Caco-2 (cell line): ENCODE measurements at regions of chr9 and their contacts with region 1.

Region 1: DNA sequence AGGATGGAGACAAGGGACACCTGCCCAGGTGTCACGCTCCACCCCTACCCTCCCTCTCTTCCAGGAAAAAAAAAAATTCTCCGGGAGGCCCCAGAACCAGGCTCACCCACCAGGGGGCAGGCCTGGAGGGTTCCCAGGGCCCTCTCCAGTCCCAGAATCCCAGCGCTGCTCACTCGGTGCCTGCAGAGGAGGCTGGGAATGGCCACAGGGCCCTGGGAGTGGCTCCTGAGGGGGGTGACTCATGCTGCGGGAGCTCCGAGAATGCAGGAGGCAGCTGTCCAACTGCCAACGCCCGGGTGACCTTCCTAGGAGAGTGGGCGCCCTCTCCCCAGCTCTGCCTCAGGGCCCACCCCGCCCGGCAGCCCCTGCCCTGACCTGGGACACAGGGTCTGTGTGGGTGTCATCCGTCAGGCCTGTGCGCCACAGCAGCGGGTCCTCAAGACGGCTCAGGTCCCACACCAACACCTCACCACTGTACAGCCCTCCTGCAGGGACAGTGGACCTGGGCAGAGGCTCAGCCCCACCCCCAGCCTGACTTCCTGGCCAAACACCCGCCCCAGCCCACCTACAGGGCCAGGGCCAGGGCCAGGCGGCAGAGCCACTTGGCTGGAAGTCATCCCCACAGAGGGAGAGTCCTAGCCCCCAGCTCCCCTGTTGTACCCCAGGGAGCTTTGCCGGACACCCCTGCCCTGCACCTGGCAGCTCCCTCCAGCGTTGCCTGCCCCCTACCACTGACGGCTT is 21.2 kb downstream of the DYNC2I2 start:
- DNase-seq: peak; percentile 98 to 99
- H3K4me3 ChIP-seq: peak overlapping the region; percentile 43
- H3K4me3 Mint-ChIP-seq: peak overlapping the region; percentile 76
- H3K27ac Mint-ChIP-seq: peak overlapping the region; percentile 95
- H3K4me1 ChIP-seq: peaks cover 26% of the 10 kb centered on the region
- H3K4me1 Mint-ChIP-seq: peaks cover 5% of the 10 kb centered on the region
- H3K27me3 ChIP-seq: no peaks in the 10 kb centered on the region
- H3K27me3 Mint-ChIP-seq: no peaks in the 10 kb centered on the region
- CTCF ChIP-seq: peak; percentile 91 to 92

Region 2: GRCh38 chr9:128355451-128355850 is 280.0 kb before region 1 on chr9:
- CTCF ChIA-PET with region 1: no interaction called
- POLR2A ChIA-PET with region 1: no interaction called
- intact Hi-C with region 1: no loop called
- DNase-seq: no peak
- H3K4me3 ChIP-seq: no peak overlapping the region
- H3K4me3 Mint-ChIP-seq: no peak overlapping the region
- H3K27ac Mint-ChIP-seq: no peak overlapping the region
- H3K4me1 ChIP-seq: no peaks in the 10 kb centered on the region
- H3K4me1 Mint-ChIP-seq: no peaks in the 10 kb centered on the region
- H3K27me3 ChIP-seq: no peaks in the 10 kb centered on the region
- H3K27me3 Mint-ChIP-seq: no peaks in the 10 kb centered on the region
- CTCF ChIP-seq: no peak

Region 3: GRCh38 chr9:128438343-128439109 is 196.9 kb before region 1 on chr9:
- CTCF ChIA-PET with region 1: interaction called, 10 read pairs
- POLR2A ChIA-PET with region 1: no interaction called
- intact Hi-C with region 1: no loop called
- DNase-seq: peak; percentile 82 to 88
- H3K4me3 ChIP-seq: no peak overlapping the region
- H3K4me3 Mint-ChIP-seq: no peak overlapping the region
- H3K27ac Mint-ChIP-seq: no peak overlapping the region
- H3K4me1 ChIP-seq: no peaks in the 10 kb centered on the region
- H3K4me1 Mint-ChIP-seq: no peaks in the 10 kb centered on the region
- H3K27me3 ChIP-seq: no peaks in the 10 kb centered on the region
- H3K27me3 Mint-ChIP-seq: no peaks in the 10 kb centered on the region
- CTCF ChIP-seq: peak; percentile 93 to 94

Region 4: DNA sequence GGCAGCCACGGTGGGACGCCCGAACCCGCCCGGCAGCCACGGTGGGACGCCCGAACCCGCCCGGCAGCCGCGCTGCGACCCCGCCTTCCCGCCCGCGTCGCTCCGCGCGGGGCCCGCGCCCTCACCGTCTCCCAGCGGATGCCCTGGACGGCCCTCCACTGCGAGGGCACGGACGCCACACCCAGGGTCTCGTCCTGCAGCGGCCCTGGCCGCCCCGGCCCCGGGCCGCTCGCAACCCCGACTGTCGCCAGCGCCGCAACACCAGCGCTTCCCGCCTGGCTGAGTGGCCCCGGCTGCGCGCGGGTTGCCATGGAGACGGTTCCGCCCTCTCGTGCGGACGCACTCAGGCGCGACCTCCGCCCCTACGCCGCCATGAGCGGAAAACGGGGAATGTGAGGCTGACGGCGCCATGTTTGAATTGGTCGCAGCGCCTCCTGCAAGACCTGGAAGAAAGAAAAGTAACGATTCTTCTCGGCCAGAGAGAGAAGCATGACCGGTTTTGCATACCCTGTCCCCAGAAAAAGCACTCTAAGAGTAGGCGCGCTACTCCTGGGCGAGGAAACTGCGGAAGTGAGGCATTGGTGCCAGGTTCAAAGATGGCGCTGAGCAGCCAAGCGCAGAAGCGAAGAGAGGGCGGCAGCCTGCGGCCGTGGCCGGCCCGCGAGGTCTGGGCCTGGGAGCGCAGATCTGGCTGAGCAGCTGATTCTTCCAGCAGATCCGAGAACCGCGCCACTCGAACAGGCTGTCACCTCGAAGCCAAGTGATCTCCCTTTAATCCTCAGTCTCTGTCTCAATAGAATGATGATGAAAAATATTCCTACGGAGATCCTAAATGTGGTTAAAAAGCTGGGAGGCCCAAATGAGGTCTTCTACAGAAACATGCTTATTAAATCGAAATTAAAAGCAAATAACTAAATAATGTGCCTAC is 21.2 kb after region 1 on chr9 and contains the start of gene DYNC2I2:
- CTCF ChIA-PET with region 1: interaction called, 6 read pairs
- POLR2A ChIA-PET with region 1: no interaction called
- intact Hi-C with region 1: loop called (anchors 2 kb)
- DNase-seq: peak; percentile 96 to 97
- H3K4me3 ChIP-seq: peak within 1 kb of the TSS; percentile 52
- H3K4me3 Mint-ChIP-seq: peak within 1 kb of the TSS; percentile 78
- H3K27ac Mint-ChIP-seq: peak within 1 kb of the TSS; percentile 100
- H3K4me1 ChIP-seq: no peaks in the 10 kb centered on the region
- H3K4me1 Mint-ChIP-seq: no peaks in the 10 kb centered on the region
- H3K27me3 ChIP-seq: no peaks in the 10 kb centered on the region
- H3K27me3 Mint-ChIP-seq: no peaks in the 10 kb centered on the region
- CTCF ChIP-seq: no peak
- total RNA-seq, gene DYNC2I2: 80.2 and 80.8 TPM in 2 replicates

Region 5: GRCh38 chr9:128688512-128689292 is 53.2 kb after region 1 on chr9 and contains the start of gene SET:
- CTCF ChIA-PET with region 1: interaction called, 16 read pairs
- POLR2A ChIA-PET with region 1: interaction called, 27 read pairs
- intact Hi-C with region 1: loop called (anchors 1 kb)
- DNase-seq: peak; percentile 94 to 98
- H3K4me3 ChIP-seq: peak within 1 kb of the TSS; percentile 68
- H3K4me3 Mint-ChIP-seq: peak within 1 kb of the TSS; percentile 96
- H3K27ac Mint-ChIP-seq: peak within 1 kb of the TSS; percentile 93
- H3K4me1 ChIP-seq: peaks cover 29% of the 10 kb centered on the region
- H3K4me1 Mint-ChIP-seq: peaks cover 32% of the 10 kb centered on the region
- H3K27me3 ChIP-seq: no peaks in the 10 kb centered on the region
- H3K27me3 Mint-ChIP-seq: no peaks in the 10 kb centered on the region
- CTCF ChIP-seq: no peak
- total RNA-seq, gene SET: 710 and 745 TPM in 2 replicates

Region 6: GRCh38 chr9:128786681-128787601 is 151.5 kb after region 1 on chr9 and contains the start of gene TBC1D13:
- CTCF ChIA-PET with region 1: no interaction called
- POLR2A ChIA-PET with region 1: no interaction called
- intact Hi-C with region 1: loop called (anchors 2 kb)
- DNase-seq: peak; percentile 94 to 95
- H3K4me3 ChIP-seq: peak within 1 kb of the TSS; percentile 94
- H3K4me3 Mint-ChIP-seq: peak within 1 kb of the TSS; percentile 97
- H3K27ac Mint-ChIP-seq: peak within 1 kb of the TSS; percentile 90
- H3K4me1 ChIP-seq: peaks cover 6% of the 10 kb centered on the region; the same call in 1 of the 2 replicates
- H3K4me1 Mint-ChIP-seq: no peaks in the 10 kb centered on the region
- H3K27me3 ChIP-seq: no peaks in the 10 kb centered on the region
- H3K27me3 Mint-ChIP-seq: no peaks in the 10 kb centered on the region
- CTCF ChIP-seq: no peak
- total RNA-seq, gene TBC1D13: 35.6 and 39.9 TPM in 2 replicates